GM12878 (cell line): ENCODE measurements at regions of chr2 and their contacts with region 1.

Region 1: GRCh38 chr2:162749994-162750393 is 88.6 kb downstream of the KCNH7 start:
- DNase-seq: no peak
- ATAC-seq: 0 out of 3 replicates have a peak, but pooled peaks have one; percentile 26
- H3K4me3 ChIP-seq: no peak overlapping the region
- H3K27ac ChIP-seq: no peak overlapping the region
- H3K4me1 ChIP-seq: no peaks in the 10 kb centered on the region
- H3K27me3 ChIP-seq: no peaks in the 10 kb centered on the region
- CTCF ChIP-seq: no peak
- EP300 ChIP-seq: no peak
- POLR2A ChIP-seq: no peak
- RAD21 ChIP-seq: no peak

Region 2: DNA sequence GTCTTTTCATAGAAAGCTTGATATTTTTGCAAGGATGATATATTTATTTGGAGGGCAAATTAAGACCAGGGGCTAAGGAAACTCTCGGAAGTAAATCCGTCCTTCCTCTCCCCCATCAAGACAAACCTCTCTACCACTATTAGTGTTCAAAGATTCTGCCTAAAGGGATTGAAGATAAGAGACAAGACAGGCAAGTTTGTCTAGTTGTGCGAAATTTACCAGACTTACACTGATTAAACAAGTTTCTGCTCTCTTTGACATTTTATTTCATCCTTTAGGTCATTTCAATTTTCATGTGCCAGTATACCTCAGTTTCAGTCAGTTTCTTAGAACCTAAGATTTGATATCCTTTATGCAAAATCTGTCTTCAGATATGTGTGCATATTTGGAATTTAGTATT is 194.8 kb before region 1 on chr2:
- CTCF ChIA-PET with region 1: no interaction called
- POLR2A ChIA-PET with region 1: no interaction called
- RAD21 ChIA-PET with region 1: no interaction called
- SMC1A ChIA-PET with region 1: no interaction called
- in situ Hi-C with region 1: no loop called
- intact Hi-C with region 1: no loop called
- DNase-seq: no peak
- ATAC-seq: no peak
- H3K4me3 ChIP-seq: no peak overlapping the region
- H3K27ac ChIP-seq: no peak overlapping the region
- H3K4me1 ChIP-seq: no peaks in the 10 kb centered on the region
- H3K27me3 ChIP-seq: no peaks in the 10 kb centered on the region
- CTCF ChIP-seq: no peak
- EP300 ChIP-seq: no peak
- POLR2A ChIP-seq: no peak
- RAD21 ChIP-seq: no peak

Region 3: DNA sequence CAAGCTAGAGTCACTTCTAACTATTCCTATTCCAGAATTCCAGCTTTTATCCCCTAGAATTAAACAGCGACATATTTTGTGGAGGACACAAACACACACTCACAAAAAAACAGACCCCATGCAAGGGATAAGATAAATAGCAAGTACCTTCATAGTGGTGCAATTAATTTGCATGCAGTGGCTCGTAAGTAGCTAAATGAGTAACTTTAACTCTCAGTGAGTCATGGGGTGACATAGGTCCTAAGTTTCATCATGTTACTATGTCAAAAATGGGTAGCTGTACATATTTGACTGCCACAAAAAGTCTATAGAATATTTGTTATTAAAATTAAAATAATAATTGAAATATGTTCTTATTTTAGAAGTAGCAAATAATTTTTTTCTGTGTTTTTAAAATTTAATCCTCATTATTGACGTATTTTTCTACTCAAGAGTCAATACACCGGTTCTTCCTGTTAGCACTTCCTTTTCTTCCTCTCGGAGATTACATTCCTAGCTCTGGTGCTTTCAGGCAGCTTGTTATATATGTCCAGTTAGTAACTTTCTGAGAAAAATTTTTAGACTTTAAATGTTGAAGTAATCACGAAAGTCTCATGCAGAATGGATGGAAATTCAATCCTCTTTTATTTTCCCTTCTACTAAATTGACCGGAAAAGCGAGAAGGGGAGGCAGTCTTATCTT is 158.5 kb before region 1 on chr2:
- CTCF ChIA-PET with region 1: no interaction called
- POLR2A ChIA-PET with region 1: no interaction called
- RAD21 ChIA-PET with region 1: no interaction called
- SMC1A ChIA-PET with region 1: no interaction called
- in situ Hi-C with region 1: no loop called
- intact Hi-C with region 1: no loop called
- DNase-seq: no peak
- ATAC-seq: peak; percentile 39; the same call in 2 of the 3 replicates
- H3K4me3 ChIP-seq: no peak overlapping the region
- H3K27ac ChIP-seq: no peak overlapping the region
- H3K4me1 ChIP-seq: no peaks in the 10 kb centered on the region
- H3K27me3 ChIP-seq: no peaks in the 10 kb centered on the region
- CTCF ChIP-seq: no peak
- EP300 ChIP-seq: no peak
- POLR2A ChIP-seq: no peak
- RAD21 ChIP-seq: no peak

Region 4: DNA sequence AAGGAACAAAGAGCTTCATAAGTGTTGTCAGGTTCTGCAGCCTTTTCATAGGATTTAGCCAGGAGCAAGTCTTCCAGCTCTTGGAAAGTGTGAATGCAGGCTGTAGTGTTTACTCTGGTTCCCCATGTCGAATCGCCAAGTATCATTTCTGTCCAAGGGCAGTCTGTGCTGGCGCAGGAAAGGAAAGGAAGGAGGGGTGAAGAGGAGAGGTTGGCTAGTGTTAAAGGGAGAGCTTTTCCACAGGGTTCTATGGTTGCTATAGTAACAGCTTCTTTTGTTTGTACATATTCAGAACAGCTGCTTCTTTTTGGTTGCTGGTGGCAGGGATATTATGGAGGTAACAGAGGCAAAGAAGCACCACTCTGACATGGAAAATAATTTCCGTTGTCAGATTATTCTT is 18.7 kb after region 1 on chr2:
- CTCF ChIA-PET with region 1: interaction called, 4 read pairs
- POLR2A ChIA-PET with region 1: no interaction called
- RAD21 ChIA-PET with region 1: interaction called, 3 read pairs
- SMC1A ChIA-PET with region 1: interaction called, 15 read pairs
- in situ Hi-C with region 1: no loop called
- intact Hi-C with region 1: no loop called
- DNase-seq: no peak
- ATAC-seq: no peak
- H3K4me3 ChIP-seq: no peak overlapping the region
- H3K27ac ChIP-seq: no peak overlapping the region
- H3K4me1 ChIP-seq: no peaks in the 10 kb centered on the region
- H3K27me3 ChIP-seq: no peaks in the 10 kb centered on the region
- CTCF ChIP-seq: no peak
- EP300 ChIP-seq: no peak
- POLR2A ChIP-seq: no peak
- RAD21 ChIP-seq: no peak